GM13977 (cell line): ENCODE measurements at regions of chr10 and their contacts with region 1.

Region 1: DNA sequence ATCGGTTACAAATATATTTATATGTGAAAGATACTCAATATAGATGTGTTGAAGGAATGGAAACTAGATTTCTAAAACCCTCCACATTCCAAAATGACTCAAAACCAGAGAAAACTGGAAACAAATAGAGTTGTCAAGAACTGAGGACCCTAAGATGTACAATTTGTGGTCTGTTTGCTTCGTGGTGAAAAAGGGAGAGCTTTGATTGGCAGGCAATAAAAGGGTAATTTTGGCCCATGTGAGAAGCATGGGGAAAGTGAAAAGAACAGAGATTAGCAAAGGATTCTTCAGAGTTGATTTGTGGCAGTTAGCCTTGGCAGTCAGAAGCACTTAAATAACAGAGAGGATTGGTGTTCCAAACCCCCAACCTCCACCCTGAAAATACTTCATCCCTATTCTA is 37.1 kb upstream of the DKK1 start:
- DNase-seq: no peak
- CTCF ChIP-seq: no peak

Region 2: GRCh38 chr10:52220947-52221346 is 56.0 kb before region 1 on chr10:
- in situ Hi-C with region 1: loop called (anchors 5 kb)
- DNase-seq: no peak
- CTCF ChIP-seq: no peak